Activated naive CD4-positive, alpha-beta T cell treated with anti-CD3 and anti-CD28 coated beads for 36 hours (primary cell): ENCODE measurements at regions of chr10 and their contacts with region 1.

Region 1: DNA sequence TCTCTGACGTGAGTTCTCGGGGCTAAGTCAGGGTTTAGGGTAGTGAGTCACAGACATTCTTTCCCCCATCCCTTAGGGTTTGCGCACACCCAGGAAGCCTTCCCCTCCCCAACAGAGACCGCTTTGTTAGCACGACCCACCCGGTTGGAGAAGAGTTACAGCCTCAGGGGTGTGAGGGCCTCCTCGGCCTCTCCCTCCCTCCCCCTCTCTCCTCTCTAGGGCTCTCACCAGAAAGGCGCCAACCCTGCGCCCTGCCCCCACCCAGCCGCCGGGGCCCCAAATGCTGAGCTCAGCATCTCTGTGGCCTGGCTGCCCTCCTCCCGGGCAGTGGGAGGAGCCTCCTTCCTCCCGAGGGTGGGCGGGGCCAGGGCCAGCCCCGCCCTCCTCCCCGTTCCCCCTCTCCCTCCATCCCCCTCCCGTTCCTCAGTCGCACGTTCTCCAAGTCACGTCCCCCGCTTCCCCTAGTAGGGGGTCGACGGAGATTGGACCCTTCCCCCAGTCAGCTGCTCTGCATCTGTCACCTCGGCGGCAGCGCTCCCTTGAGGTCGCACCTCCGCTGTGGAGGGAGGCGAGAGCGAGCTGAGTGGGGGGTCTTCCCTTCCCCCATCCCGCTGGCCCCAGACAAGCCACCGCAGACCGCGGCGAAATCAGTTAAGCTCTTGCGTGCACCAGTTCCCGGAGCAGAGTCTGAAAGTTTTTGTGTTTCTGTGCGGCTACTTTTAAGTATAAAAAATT is 13.0 kb upstream of the DDIT4 start:
- DNase-seq: peak; percentile 94
- H3K4me3 Mint-ChIP-seq: peak overlapping the region; percentile 81
- H3K27ac Mint-ChIP-seq: peak overlapping the region; percentile 99
- H3K4me1 Mint-ChIP-seq: peaks cover 65% of the 10 kb centered on the region
- H3K27me3 Mint-ChIP-seq: no peaks in the 10 kb centered on the region

Region 2: DNA sequence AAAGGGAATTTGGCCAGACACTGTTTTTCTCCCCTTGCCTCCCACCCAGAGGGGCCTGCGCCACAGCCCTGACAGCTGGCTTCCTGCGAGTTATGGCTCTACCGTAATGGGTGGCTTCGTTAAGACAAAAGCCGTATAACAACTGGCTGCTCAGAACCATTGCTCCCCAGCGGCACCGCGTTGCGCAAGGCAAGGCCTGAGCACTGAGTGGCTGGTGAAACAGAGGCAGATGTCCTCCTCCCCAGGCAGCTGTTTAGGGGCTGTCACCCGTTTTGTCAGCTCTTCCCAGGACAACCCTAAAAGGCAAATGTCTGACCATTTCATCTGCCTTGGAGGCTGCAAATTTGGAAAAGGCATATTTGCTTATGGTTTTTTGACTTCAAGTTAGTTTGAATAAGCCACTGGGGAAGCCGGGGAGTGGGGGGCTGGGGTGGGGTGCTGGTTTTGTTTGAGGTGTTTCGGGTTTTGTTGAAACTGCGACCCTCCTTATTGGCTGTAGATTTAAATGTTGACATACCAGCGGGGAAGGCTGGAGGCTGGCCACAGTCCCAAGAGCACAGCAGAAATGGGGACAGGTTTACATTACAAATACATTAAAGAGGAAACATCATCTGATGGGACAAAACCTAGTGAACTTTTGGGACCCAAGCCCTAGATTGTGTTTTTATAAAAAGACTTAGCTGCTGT is 171.7 kb before region 1 on chr10:
- CTCF ChIA-PET with region 1: no interaction called
- intact Hi-C with region 1: loop called (anchors 2 kb)
- DNase-seq: peak; percentile 81
- H3K4me3 Mint-ChIP-seq: peak overlapping the region; percentile 99
- H3K27ac Mint-ChIP-seq: peak overlapping the region; percentile 99
- H3K4me1 Mint-ChIP-seq: peaks cover 63% of the 10 kb centered on the region
- H3K27me3 Mint-ChIP-seq: no peaks in the 10 kb centered on the region

Region 3: GRCh38 chr10:72248468-72249151 is 12.1 kb before region 1 on chr10:
- CTCF ChIA-PET with region 1: interaction called, 10 read pairs
- intact Hi-C with region 1: loop called (anchors 1 kb)
- DNase-seq: peak; percentile 87
- H3K4me3 Mint-ChIP-seq: peak overlapping the region; percentile 75
- H3K27ac Mint-ChIP-seq: peak overlapping the region; percentile 92
- H3K4me1 Mint-ChIP-seq: peaks cover 78% of the 10 kb centered on the region
- H3K27me3 Mint-ChIP-seq: no peaks in the 10 kb centered on the region

Region 4: DNA sequence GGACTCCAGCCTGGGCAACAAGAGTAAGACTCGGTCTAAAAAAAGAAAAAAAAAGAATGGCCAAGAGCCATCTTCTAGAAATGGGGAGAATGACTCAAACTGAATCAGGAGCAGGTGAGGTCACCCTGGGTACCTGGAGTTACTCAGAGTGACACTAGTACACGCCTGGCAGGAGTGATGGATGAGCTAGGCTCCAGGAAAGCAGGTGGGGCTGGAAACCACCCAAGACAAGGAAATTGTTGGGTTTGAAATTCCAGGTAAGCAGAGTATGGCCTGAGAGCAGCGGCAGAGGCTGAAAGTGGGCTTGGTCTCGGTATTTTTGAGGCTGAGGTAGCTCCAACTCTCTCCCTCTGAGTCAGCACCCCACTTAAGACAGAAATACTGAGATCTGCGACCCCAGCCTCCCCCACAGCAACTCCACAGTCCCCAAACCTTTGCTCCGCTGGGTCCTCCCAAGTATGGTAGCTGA is 31.5 kb after region 1 on chr10:
- CTCF ChIA-PET with region 1: interaction called, 3 read pairs
- intact Hi-C with region 1: loop called (anchors 1 kb)
- DNase-seq: peak; percentile 90
- H3K4me3 Mint-ChIP-seq: peak overlapping the region; percentile 43
- H3K27ac Mint-ChIP-seq: peak overlapping the region; percentile 100
- H3K4me1 Mint-ChIP-seq: peaks cover 59% of the 10 kb centered on the region
- H3K27me3 Mint-ChIP-seq: no peaks in the 10 kb centered on the region

Region 5: GRCh38 chr10:72319416-72320254 is 58.9 kb after region 1 on chr10:
- CTCF ChIA-PET with region 1: interaction called, 4 read pairs
- intact Hi-C with region 1: loop called (anchors 1 kb)
- DNase-seq: peak; percentile 94
- H3K4me3 Mint-ChIP-seq: peak overlapping the region; percentile 86
- H3K27ac Mint-ChIP-seq: peak overlapping the region; percentile 99
- H3K4me1 Mint-ChIP-seq: peaks cover 79% of the 10 kb centered on the region
- H3K27me3 Mint-ChIP-seq: no peaks in the 10 kb centered on the region